ENCODE measurements at regions of chr12 and their contacts with region 1.

Region 1: GRCh38 chr12:49130151-49131050 is 794 bp downstream of the TUBA1B start:
- H3K4me3 Mint-ChIP-seq: peak overlapping the region; percentile 93
- H3K27ac Mint-ChIP-seq: peak overlapping the region; percentile 100
- H3K4me1 Mint-ChIP-seq: peaks cover 37% of the 10 kb centered on the region
- H3K27me3 Mint-ChIP-seq: no peaks in the 10 kb centered on the region

Region 2: GRCh38 chr12:49069507-49070346 is 60.7 kb before region 1 on chr12 and contains the start of gene RHEBL1:
- intact Hi-C with region 1: loop called (anchors 1 kb)
- H3K4me3 Mint-ChIP-seq: peak within 1 kb of the TSS; percentile 85
- H3K27ac Mint-ChIP-seq: peak within 1 kb of the TSS; percentile 87
- H3K4me1 Mint-ChIP-seq: peaks cover 16% of the 10 kb centered on the region
- H3K27me3 Mint-ChIP-seq: no peaks in the 10 kb centered on the region

Region 3: DNA sequence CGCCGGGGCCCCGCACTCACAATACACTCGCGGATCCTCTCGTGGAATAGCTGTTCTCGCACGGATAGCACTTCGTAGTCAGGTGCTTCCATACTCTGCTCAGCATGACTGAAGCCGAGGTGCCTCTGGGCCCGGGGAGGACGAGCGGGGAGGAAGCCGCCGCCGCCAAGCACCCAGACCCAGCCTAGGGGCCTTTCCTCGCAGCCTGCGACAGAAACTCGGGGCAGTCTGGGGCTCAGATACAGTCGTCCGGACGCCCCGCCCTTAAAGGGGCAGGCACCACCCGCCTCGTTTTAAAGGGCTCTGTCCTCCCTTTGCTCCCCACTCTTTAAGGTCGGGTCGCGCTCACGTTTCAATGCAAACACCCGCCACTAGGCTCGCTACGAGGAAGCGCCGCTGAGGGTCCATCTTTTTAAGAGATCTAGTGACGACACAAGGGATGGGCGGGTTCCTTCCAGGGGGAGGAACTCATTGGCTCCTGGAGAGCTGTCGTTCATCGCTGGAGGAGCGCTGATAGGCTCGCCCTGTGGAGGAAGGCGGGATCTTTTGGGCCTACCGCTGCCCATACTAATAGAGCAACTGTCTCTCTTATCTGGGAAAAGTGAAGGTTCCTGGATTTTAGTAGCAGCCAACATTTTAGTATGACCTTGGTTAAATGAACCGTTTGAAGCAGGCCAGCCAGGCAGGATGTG is 19.8 kb before region 1 on chr12 and contains the start of gene LMBR1L:
- intact Hi-C with region 1: loop called (anchors 1 kb)
- H3K4me3 Mint-ChIP-seq: peak within 1 kb of the TSS; percentile 85
- H3K27ac Mint-ChIP-seq: peak within 1 kb of the TSS; percentile 94
- H3K4me1 Mint-ChIP-seq: peaks cover 48% of the 10 kb centered on the region
- H3K27me3 Mint-ChIP-seq: no peaks in the 10 kb centered on the region

Region 4: DNA sequence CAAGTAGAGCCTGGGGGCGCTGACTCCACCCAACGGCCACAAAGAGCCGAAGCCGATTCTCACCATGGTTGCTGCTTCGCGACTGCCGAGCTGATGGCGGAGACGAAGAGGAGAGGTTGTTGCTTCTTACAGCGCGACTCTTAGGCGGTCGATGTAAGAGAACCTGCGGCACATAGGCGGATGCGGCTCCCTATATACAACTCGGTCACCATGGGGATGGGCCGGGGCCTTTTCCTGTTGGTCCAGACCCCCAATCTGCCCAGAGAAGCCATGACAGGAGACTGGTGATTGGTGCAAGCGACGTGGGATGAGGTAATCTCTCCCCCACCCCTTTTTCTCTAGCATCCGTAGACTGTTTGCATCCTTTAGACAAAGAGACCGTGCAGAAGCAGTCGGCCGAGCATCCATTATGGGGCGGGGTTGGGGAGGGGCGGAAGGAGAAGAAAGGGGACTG is 58.5 kb after region 1 on chr12 and contains the start of gene TUBA1A:
- intact Hi-C with region 1: loop called (anchors 2 kb)
- H3K4me3 Mint-ChIP-seq: peak within 1 kb of the TSS; percentile 89
- H3K27ac Mint-ChIP-seq: peak within 1 kb of the TSS; percentile 98
- H3K4me1 Mint-ChIP-seq: peaks cover 36% of the 10 kb centered on the region
- H3K27me3 Mint-ChIP-seq: no peaks in the 10 kb centered on the region

Region 5: GRCh38 chr12:49232940-49233841 is 102.8 kb after region 1 on chr12:
- intact Hi-C with region 1: loop called (anchors 1 kb)
- H3K4me3 Mint-ChIP-seq: peak overlapping the region; percentile 77
- H3K27ac Mint-ChIP-seq: peak overlapping the region; percentile 94
- H3K4me1 Mint-ChIP-seq: peaks cover 67% of the 10 kb centered on the region
- H3K27me3 Mint-ChIP-seq: peaks cover 1% of the 10 kb centered on the region